GM12878 (cell line): ENCODE measurements at regions of chr10 and their contacts with region 1.

Region 1: DNA sequence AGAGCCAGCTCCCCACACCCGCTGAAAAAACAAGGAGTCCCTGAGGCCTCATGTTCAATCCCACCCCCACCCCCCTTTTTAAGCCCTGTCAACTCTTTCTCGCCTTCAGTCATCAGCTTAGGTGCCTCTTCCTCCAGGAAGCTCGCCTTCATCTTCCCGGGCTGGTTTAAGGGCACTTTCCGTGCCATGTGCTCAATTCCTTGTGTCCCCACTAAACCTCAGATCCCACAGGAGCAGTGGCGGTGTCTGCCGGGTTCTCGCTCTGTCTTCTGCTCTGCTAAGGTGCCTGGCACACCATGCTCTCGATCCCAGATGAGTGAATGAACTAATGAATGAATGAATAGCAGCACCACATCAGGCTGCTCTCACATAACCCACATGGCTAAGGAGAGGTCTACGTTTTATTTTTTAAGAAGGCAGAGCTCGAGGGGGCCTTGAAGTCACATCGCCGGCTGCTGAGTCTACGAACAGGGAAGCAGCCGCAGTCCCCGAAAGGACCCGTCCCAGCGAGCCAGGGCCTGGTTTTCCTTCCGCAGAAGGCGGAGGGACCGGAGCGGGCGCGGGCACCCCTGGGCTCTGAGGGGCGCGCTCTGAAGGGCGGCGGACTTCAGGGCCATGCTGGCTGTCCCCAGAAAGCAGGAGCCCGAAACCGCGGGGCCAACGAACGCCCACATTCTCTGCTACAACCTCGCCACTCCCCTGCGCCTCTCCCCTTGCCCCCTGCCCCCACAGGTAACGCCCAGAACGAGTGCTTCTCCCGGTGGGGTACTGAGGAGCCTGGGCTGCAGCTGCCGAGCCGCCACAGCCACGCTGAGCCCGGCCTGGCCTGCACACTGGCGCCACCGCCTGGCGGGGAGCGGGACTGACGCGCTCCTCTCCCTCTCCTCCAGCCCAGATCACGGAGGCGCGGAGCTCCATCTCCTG is 73.4 kb upstream of the KCNMA1 start:
- DNase-seq: no peak
- ATAC-seq: peak; percentile 79
- H3K4me3 ChIP-seq: peak overlapping the region; percentile 65
- H3K27ac ChIP-seq: peak overlapping the region; percentile 21
- H3K4me1 ChIP-seq: peaks cover 21% of the 10 kb centered on the region
- H3K27me3 ChIP-seq: no peaks in the 10 kb centered on the region
- CTCF ChIP-seq: peak; percentile 97 to 99 (median 99)
- EP300 ChIP-seq: no peak
- POLR2A ChIP-seq: no peak
- RAD21 ChIP-seq: peak; percentile 91

Region 2: GRCh38 chr10:77391605-77392235 is 319.3 kb before region 1 on chr10:
- CTCF ChIA-PET with region 1: interaction called, 93 read pairs
- POLR2A ChIA-PET with region 1: no interaction called
- RAD21 ChIA-PET with region 1: interaction called, 13 read pairs
- SMC1A ChIA-PET with region 1: interaction called, 16 read pairs
- in situ Hi-C with region 1: no loop called
- intact Hi-C with region 1: loop called (anchors 5 kb)
- DNase-seq: no peak
- ATAC-seq: peak; percentile 84
- H3K4me3 ChIP-seq: no peak overlapping the region
- H3K27ac ChIP-seq: no peak overlapping the region
- H3K4me1 ChIP-seq: no peaks in the 10 kb centered on the region
- H3K27me3 ChIP-seq: no peaks in the 10 kb centered on the region; a peak in 1 of 4 replicates
- CTCF ChIP-seq: peak; percentile 51 to 73 (median 72)
- EP300 ChIP-seq: no peak
- POLR2A ChIP-seq: no peak
- RAD21 ChIP-seq: peak; percentile 87

Region 3: GRCh38 chr10:77524281-77524711 is 186.7 kb before region 1 on chr10:
- CTCF ChIA-PET with region 1: interaction called, 7 read pairs
- POLR2A ChIA-PET with region 1: no interaction called
- RAD21 ChIA-PET with region 1: interaction called, 6 read pairs
- SMC1A ChIA-PET with region 1: interaction called, 14 read pairs
- in situ Hi-C with region 1: no loop called
- intact Hi-C with region 1: no loop called
- DNase-seq: no peak
- ATAC-seq: no peak
- H3K4me3 ChIP-seq: no peak overlapping the region
- H3K27ac ChIP-seq: no peak overlapping the region
- H3K4me1 ChIP-seq: no peaks in the 10 kb centered on the region
- H3K27me3 ChIP-seq: no peaks in the 10 kb centered on the region; a peak in 1 of 4 replicates
- CTCF ChIP-seq: no peak
- EP300 ChIP-seq: no peak
- POLR2A ChIP-seq: no peak
- RAD21 ChIP-seq: no peak

Region 4: DNA sequence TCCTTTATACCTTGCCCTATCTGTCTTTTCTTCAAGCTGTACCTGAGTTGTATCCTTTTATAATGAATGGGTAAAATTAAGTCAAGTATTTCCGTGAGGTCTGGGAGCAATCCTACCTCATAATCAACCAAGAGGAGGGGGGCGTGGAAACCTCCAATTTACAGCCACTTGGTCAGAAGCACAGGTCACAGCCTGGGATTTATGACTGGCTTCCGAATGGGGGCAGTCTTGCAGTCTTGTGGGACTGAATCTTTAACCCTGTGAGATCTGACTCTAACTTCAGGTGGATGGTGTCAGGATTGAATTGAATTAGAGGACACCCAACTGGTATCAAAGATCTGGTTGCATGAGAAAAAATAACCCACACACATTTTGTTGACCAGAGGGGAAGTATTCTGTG is 49.9 kb before region 1 on chr10:
- CTCF ChIA-PET with region 1: interaction called, 56 read pairs
- POLR2A ChIA-PET with region 1: interaction called, 5 read pairs
- RAD21 ChIA-PET with region 1: interaction called, 30 read pairs
- SMC1A ChIA-PET with region 1: interaction called, 52 read pairs
- in situ Hi-C with region 1: no loop called
- intact Hi-C with region 1: no loop called
- DNase-seq: no peak
- ATAC-seq: peak; percentile 30; the same call in 1 of the 3 replicates
- H3K4me3 ChIP-seq: no peak overlapping the region
- H3K27ac ChIP-seq: no peak overlapping the region
- H3K4me1 ChIP-seq: no peaks in the 10 kb centered on the region
- H3K27me3 ChIP-seq: no peaks in the 10 kb centered on the region
- CTCF ChIP-seq: no peak
- EP300 ChIP-seq: no peak
- POLR2A ChIP-seq: no peak
- RAD21 ChIP-seq: 0 out of 2 replicates have a peak, but pooled peaks have one; percentile 27

Region 5: DNA sequence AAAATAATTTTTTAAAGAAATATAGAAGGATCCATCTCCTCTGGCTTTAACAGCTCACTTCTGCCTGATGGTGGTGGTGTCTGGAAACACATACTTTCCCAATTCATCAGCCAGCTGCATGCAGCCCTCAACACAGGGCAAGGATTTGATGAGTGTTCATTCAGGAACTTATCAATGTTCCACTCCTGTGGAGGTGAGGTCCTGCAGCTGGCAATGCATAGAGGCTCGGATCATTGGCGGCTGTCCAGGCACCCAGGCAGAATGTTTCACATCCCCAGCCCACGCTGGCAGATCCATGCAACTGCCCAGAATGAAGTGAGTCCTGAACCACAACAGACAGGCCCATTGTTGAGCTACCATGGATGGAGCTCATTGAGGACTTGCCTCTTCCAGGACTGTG is 18.2 kb before region 1 on chr10:
- CTCF ChIA-PET with region 1: interaction called, 84 read pairs
- POLR2A ChIA-PET with region 1: no interaction called
- RAD21 ChIA-PET with region 1: interaction called, 13 read pairs
- SMC1A ChIA-PET with region 1: interaction called, 59 read pairs
- in situ Hi-C with region 1: no loop called
- intact Hi-C with region 1: no loop called
- DNase-seq: no peak
- ATAC-seq: no peak
- H3K4me3 ChIP-seq: no peak overlapping the region
- H3K27ac ChIP-seq: no peak overlapping the region
- H3K4me1 ChIP-seq: no peaks in the 10 kb centered on the region
- H3K27me3 ChIP-seq: no peaks in the 10 kb centered on the region
- CTCF ChIP-seq: no peak
- EP300 ChIP-seq: no peak
- POLR2A ChIP-seq: no peak
- RAD21 ChIP-seq: no peak

Region 6: DNA sequence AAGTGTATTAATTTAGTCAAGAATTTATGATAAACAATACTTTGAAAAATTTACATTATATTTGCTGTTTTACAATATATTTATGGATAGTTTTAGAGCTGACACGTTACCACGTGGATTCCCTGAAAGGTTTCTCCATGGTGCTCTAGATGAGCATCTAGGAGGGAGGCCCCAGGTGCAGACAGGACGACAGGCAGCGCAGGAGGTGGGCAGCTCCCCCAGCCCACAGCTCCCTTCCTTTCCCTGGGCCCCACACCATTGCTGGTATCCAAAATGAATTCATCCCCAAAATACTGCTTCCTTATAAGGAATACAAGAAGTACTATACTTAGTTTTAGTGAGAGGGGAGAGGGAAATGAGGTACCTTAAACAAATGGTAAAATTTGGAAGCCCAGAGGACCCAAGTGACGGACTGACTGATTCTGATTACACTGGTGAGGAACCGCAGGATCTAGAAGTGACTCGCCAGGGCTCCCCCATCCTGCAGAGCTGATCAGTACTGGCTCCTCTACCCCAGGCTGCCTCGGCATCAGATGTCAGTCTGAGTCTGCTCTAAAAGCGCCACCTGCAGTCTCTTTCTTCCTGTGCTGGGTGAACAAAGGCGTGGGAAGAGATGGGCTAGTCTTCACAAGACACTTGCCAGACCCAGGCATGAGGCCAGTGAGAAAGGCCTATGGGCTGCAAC is 126.4 kb after region 1 on chr10:
- CTCF ChIA-PET with region 1: interaction called, 175 read pairs
- POLR2A ChIA-PET with region 1: interaction called, 5 read pairs
- RAD21 ChIA-PET with region 1: interaction called, 20 read pairs
- SMC1A ChIA-PET with region 1: interaction called, 34 read pairs
- in situ Hi-C with region 1: loop called (anchors 5 kb)
- intact Hi-C with region 1: loop called (anchors 1 kb)
- DNase-seq: peak; percentile 68
- ATAC-seq: peak; percentile 96
- H3K4me3 ChIP-seq: no peak overlapping the region
- H3K27ac ChIP-seq: peak overlapping the region; percentile 57
- H3K4me1 ChIP-seq: peaks cover 11% of the 10 kb centered on the region
- H3K27me3 ChIP-seq: no peaks in the 10 kb centered on the region
- CTCF ChIP-seq: peak; percentile 59 to 94 (median 66); a peak in 5 of 6 replicates
- EP300 ChIP-seq: peak in 1 of 2 experiments; percentile 73; a peak in 3 of 4 replicates
- POLR2A ChIP-seq: no peak
- RAD21 ChIP-seq: peak; percentile 84